ENCODE measurements at regions of chr11 and their contacts with region 1.

Region 1: DNA sequence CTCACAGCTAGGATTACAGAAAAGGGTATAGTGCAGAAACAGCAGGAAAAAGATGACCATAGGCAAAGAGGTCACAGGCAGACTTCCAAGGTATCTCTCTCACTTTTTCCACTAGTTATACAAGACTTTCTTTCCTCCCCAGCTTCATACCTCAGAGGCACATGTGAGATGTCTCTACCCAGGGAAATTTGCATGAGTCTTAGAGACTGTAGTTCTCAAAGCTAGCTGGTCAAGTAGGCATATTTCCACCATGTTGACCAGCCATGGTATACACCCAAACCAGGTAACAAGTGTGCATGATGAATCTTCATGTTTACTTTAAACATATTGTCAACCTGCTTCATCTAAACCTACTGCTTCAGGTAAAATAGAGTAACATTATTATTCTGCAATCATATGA is 27.9 kb downstream of the PRMT3 start:
- DNase-seq: no peak
- H3K4me3 ChIP-seq: no peak overlapping the region
- H3K27me3 ChIP-seq: no peaks in the 10 kb centered on the region
- CTCF ChIP-seq: no peak

Region 2: DNA sequence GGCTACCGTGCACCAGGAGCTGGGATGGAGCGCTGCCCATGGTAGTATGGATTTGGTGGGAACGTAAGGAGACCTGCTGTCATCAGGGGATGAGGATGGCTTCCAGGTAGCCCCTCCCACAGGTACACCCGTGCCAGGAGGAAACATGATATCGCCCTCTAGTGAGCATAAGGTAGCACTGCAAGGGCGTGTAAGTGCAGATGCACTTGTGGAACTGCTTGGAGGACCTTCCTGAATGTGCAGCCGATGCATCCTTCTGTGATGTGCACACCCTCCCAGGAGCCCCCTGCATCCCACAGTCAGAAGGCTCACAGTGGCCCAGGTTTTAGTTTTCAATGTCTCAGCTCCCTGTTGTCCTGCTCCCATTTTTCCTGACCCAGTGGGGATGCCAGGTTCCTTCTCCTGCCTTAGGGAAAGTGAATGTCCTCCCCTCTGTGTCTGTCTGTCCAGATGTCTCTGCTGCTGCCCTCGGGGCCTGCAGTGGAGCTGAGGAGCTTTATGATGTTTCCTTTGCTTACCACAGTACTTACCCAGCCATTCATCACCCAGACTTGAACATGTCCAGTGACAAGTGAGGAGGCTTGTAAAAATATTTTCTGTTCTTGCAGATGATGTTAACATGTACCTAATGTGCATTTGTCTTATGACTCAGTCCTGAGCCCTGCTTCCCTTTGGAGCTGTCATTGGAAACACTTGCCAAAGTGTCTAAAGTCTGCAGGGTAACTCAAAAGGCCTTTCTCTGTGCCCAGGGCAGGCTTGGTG is 304.3 kb before region 1 on chr11:
- CTCF ChIA-PET with region 1: no interaction called
- POLR2A ChIA-PET with region 1: no interaction called
- DNase-seq: peak; percentile 98
- H3K4me3 ChIP-seq: no peak overlapping the region
- H3K27me3 ChIP-seq: no peaks in the 10 kb centered on the region
- CTCF ChIP-seq: peak; percentile 91

Region 3: DNA sequence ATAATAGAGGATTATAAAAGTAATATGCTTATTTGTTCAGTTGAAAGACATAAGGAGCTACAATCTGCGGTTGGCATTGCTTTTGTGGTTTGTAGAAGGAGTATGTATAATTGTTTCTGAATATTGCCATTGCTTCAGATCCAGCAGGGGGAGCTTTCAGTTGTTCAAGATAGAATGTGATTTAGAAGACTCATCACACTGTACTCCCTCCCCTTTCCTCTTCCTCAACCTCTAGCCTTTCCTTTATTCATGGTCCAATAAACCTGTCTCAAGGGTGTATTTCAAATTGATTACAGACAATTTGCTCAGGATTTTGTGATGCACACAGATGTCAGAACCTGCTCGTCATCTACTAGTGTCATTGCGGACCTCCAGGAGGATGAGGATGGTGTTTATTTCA is 18.2 kb before region 1 on chr11:
- CTCF ChIA-PET with region 1: interaction called, 21 read pairs
- POLR2A ChIA-PET with region 1: no interaction called
- DNase-seq: no peak
- H3K4me3 ChIP-seq: no peak overlapping the region
- H3K27me3 ChIP-seq: no peaks in the 10 kb centered on the region
- CTCF ChIP-seq: peak; percentile 72

Region 4: DNA sequence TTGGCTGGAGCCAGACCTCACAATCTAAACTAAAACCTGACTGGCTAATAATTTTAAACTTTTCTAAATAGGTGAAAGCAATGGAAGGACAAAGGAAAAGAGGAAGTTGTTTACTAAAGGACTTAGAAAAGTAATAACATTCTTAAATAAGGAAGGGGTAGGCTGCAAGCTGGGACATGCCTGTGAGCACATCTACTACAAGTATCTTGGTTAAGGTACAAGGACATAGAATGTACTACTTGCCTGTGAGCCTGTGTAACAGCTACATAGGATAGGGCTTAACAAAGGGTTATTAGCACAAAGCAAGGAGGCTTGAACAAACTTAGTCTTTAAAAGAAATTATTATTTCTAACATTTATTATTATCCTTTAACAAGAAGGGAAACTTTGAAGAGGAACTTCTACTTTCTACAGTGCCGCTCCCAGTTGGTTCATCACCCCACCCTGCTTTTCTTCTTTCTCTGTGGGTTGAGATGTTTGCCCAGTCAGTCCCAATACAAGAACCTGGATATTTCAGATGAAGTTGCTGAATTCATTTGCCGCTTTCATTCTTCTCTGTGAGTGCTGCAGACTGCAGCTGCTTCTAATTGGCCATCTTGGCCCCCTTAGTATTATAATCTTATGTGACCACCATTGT is 59.6 kb after region 1 on chr11:
- CTCF ChIA-PET with region 1: no interaction called
- POLR2A ChIA-PET with region 1: no interaction called
- DNase-seq: no peak
- H3K4me3 ChIP-seq: no peak overlapping the region
- H3K27me3 ChIP-seq: no peaks in the 10 kb centered on the region
- CTCF ChIP-seq: no peak

Measured in BJ (cell line).